Psoas muscle (tissue), 8 donors: ENCODE measurements at regions of chr20 and their contacts with region 1.

Region 1: DNA sequence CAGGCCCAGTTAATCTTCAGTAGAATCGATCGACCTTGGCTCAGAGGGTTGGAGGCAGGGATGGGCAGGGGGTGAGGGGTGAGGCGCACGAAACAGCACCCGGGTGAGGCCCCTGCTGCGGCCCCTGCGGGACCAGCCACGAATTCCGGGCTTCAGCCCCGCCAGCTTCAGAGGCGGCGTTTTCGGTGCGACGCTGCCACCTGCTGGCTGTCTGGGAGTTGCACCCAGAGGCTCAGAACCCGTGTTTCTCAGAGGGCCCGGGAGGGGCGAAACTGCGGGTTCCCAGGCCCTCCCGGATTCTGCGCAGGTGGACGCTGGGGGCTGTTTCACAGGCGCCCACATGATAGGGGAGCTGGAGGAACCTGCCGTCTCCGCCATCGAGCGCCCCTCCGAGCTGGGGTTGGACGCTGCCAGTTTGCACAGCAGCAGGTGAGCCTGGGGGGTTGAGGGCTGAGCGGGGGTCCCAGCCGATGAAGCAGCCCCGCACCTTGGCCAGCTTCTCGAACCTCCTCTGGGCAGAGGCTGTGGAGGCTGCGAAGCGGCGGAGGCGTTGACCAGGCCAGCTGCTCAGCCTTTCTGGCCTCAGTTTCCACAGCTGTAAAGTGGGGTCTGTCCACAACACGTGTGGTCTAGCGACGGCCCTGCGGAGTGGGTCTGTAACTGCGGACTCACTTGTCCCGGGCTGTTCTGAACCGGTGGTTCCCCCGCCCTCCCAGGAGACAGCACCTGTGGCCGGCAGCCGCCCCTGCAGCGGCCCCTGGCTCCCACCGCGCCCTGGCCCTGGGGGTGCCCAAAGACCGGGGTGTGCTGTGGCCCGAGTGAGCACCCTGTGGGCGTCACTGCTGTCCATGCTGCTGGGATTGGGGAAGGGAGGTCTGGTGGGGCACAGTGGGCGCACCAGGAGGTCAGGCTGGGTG is 2.5 kb upstream of the BHLHE23 start:
- DNase-seq: peak; percentile 72 to 87
- ATAC-seq: peak; percentile 87 to 97 (median 88)
- H3K4me3 ChIP-seq: peak overlapping the region; percentile 32
- H3K27ac ChIP-seq: no peak overlapping the region
- H3K4me1 ChIP-seq: no peaks in the 10 kb centered on the region
- H3K27me3 ChIP-seq: peaks cover 0 to 99% (median 42%) of the 10 kb centered on the region in 3 donors
- CTCF ChIP-seq: peak; percentile 93

Region 2: GRCh38 chr20:62874745-62875344 is 134.5 kb before region 1 on chr20:
- intact Hi-C with region 1: loop called (anchors 2 to 5 kb)
- DNase-seq: peak in 1 of 2 donors; percentile 6
- ATAC-seq: no peak
- H3K4me3 ChIP-seq: no peak overlapping the region
- H3K27ac ChIP-seq: no peak overlapping the region
- H3K4me1 ChIP-seq: peaks cover 16% of the 10 kb centered on the region
- H3K27me3 ChIP-seq: no peaks in the 10 kb centered on the region
- CTCF ChIP-seq: no peak

Region 3: DNA sequence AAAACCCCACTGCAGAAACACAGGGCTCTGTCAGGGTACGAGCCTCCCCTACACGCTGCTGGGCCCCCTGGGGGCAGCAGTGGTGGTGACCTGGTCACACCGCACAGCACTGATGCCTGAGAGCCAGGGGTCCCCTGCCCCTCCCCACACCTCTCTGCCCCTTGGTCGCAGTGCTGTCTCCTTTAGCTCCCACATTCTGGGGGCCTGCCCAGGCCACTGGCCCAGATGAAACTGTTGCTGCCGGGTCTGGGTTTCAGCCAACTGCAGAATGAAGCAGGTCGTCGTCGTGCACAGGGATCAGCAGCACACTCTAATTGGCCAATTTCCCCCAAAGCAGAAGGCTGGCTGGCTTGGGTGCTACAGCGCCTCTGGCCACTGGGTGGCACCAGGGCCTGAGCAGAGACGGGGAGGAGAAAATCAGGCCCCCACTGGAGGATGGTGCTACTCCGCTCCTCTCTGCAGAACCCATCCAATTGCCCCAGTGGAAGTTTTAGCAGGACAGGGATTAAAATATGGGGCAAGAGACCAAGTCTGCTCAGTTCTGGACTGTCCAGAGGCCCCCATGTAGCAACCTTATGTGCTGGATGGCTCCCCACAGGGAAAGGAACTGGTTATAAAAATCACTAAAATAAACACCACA is 109.1 kb before region 1 on chr20:
- intact Hi-C with region 1: loop called (anchors 2 kb)
- DNase-seq: peak; percentile 74 to 87
- ATAC-seq: peak; percentile 88 to 93 (median 90)
- H3K4me3 ChIP-seq: no peak overlapping the region
- H3K27ac ChIP-seq: no peak overlapping the region
- H3K4me1 ChIP-seq: peaks cover 10% of the 10 kb centered on the region
- H3K27me3 ChIP-seq: no peaks in the 10 kb centered on the region
- CTCF ChIP-seq: peak; percentile 80

Region 4: DNA sequence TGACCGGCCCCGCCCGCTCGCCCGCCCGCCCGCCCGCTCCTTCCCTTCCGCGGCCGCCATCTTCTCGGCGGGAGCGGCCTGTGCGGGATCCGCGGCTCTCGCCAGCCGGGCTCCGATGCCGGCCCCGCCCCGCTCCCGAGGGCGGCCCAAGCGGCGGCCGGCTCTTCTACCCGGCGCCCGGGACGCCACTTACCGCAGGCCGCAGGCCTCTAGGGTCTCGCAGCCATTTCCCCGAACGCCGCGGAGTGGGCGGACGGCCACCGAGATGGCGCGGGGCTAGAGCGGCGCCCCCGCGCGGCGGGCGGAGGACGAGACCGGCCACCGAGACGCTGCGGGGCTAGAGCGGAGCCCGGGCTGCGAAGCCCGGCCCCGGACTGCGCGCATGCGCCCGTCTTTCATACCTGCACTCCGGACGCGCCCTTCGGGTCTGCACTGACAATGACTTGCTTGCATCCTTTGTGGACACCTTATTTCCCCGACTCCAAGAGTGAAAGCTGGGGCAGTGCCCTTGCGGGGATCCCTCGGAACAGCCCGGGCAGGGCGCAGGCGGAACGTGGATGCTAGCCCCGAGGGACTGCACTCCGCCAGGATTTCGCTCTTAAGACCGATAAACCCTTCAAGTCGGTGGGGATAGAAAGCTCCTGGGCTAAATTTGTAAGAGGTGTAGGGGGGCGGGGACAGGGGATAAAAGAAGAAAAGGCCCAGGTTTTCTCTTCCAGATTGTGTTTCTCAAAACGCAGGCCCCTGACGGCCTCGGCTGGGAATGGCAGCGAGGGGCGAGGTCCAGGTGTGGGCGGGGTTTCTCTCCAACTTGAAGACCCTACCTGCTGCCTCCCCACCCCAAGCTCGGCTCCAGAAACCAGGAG is 82.8 kb before region 1 on chr20 and contains the start of gene DIDO1:
- intact Hi-C with region 1: no loop called
- DNase-seq: peak; percentile 89 to 93
- ATAC-seq: peak; percentile 87 to 91 (median 89)
- H3K4me3 ChIP-seq: peak within 1 kb of the TSS; percentile 99
- H3K27ac ChIP-seq: peak within 1 kb of the TSS; percentile 97
- H3K4me1 ChIP-seq: peaks cover 66% of the 10 kb centered on the region
- H3K27me3 ChIP-seq: no peaks in the 10 kb centered on the region
- CTCF ChIP-seq: peak; percentile 82
- total RNA-seq, gene DIDO1: 23.0 to 32.4 (median 27.9) TPM

Region 5: DNA sequence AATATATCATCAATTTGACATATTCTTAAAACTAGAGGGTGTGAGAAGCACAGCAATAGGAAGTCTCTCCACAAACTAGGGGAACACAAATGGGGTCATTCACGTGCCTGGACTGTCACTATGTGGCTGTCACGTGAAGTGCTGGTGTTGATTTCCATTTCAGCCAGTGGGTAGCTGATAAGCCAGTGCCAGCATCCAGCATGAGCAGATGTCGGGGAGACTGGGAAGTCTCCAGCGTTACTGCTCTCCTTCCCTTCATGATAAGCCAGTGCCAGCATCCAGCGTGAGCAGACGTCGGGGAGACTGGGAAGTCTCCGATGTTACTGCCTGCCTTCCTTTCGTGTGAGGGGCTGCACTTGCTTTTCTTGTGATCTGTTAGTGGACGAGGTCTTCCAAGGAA is 62.4 kb before region 1 on chr20:
- intact Hi-C with region 1: no loop called
- DNase-seq: no peak
- ATAC-seq: peak in 3 of 4 donors; percentile 29 to 74 (median 52)
- H3K4me3 ChIP-seq: no peak overlapping the region
- H3K27ac ChIP-seq: no peak overlapping the region
- H3K4me1 ChIP-seq: peaks cover 7% of the 10 kb centered on the region
- H3K27me3 ChIP-seq: no peaks in the 10 kb centered on the region
- CTCF ChIP-seq: no peak

Region 6: DNA sequence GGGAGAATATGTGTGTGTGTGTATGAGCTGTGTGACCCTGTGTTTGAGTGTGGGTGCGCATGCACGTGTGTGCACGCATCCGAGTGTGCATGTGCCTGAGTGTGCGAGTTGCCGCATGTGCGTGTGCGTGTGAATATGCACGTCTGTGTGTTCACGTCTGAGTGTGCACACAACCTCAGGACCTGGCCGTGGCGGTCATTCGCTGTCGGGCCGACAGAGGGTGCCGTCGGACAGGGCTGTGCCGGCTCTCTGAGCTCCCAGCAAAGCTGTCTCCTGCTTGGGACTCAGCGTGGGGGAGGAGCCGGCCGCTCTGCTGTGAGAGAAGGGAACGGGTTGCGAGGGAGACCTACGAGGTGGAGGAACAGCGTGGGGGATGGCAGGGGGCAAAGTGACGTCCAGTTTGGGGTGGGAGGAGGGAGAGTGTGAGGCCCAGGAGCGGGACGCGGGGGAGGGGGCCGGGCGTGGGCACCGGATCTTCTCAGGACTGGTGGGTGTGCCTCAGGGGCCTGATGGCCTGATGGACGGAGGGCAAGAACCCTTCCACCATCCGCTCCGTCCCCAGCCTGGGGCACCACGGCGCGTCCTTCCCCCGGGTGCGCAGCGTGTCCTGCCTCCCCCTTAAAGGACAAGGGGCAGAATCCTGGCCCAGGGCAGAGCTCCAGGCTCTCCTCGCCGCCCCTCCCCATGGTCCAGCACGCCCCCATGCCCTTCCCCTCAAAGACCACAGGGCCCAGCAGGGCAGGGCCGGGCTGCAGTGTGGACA is 36.9 kb before region 1 on chr20:
- intact Hi-C with region 1: loop called (anchors 1 kb)
- DNase-seq: peak; percentile 86 to 92
- ATAC-seq: peak; percentile 95 to 99 (median 98)
- H3K4me3 ChIP-seq: peak overlapping the region; percentile 34
- H3K27ac ChIP-seq: no peak overlapping the region
- H3K4me1 ChIP-seq: no peaks in the 10 kb centered on the region
- H3K27me3 ChIP-seq: peaks cover 0 to 88% (median 23%) of the 10 kb centered on the region in 3 donors
- CTCF ChIP-seq: peak; percentile 85